Activated T-helper 2 cell treated with anti-CD3 and anti-CD28 coated beads, Interferon-gamma antibody, Interleukin-2, Interleukin-4, amounts not matched to agents 10 μg/mL and 5 μg/mL and 100 μg/mL, durations not matched to agents 14 hours and 24 hours and 36 hours (primary cell): ENCODE measurements at regions of chr2 and their contacts with region 1.

Region 1: GRCh38 chr2:175282290-175282689 is 100.8 kb upstream of the ATP5MC3 start:
- DNase-seq: no peak
- H3K4me3 Mint-ChIP-seq: no peak overlapping the region
- H3K27ac Mint-ChIP-seq: no peak overlapping the region
- H3K4me1 Mint-ChIP-seq: peaks cover 2% of the 10 kb centered on the region
- H3K27me3 Mint-ChIP-seq: peaks cover 18% of the 10 kb centered on the region

Region 2: DNA sequence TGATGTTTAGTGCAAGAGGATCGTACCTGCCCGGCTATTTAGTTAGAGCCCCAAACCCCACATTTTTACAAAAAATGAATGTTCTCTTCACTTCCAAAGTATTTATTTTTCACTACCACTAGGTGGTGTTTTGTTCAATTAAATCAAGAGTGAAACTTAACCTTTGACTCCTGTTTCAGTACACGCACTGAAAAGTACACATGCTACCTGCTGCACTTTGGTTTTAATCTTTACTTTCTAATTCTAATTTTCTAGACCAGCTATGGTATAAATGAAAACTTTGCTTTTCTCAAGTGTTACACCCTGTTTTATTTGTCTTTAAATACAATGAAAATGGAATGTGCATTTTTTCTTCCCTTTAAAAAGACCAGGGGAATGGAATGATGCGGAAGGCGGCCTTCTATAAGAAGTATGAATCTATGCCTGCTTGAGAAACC is 245.7 kb before region 1 on chr2:
- intact Hi-C with region 1: loop called (anchors 2 kb)
- DNase-seq: no peak
- H3K4me3 Mint-ChIP-seq: no peak overlapping the region
- H3K27ac Mint-ChIP-seq: no peak overlapping the region
- H3K4me1 Mint-ChIP-seq: peaks cover 4% of the 10 kb centered on the region
- H3K27me3 Mint-ChIP-seq: no peaks in the 10 kb centered on the region

Region 3: DNA sequence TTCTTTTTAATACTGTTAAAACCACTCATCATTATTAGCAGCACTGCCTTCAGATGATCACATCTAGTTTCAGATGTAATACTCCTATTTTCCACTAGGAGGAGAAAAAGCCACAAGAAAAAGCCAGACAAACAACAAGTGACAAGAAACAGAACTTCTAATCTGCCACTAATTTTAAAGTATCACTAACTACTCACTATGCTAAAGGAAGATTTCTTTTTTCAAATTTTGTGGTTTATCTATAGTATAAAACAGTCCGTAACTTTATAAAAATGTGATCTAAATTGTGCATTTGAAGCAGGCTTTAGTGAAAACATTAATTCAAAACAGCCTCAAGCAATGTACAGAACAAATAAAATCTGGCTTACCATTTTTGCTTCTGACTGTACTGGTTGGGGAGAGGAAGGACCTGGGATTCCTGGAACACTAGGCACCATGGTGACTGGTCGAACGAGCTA is 171.1 kb before region 1 on chr2:
- intact Hi-C with region 1: loop called (anchors 2 kb)
- DNase-seq: no peak
- H3K4me3 Mint-ChIP-seq: no peak overlapping the region
- H3K27ac Mint-ChIP-seq: peak overlapping the region; percentile 72
- H3K4me1 Mint-ChIP-seq: peaks cover 10% of the 10 kb centered on the region
- H3K27me3 Mint-ChIP-seq: no peaks in the 10 kb centered on the region

Region 4: GRCh38 chr2:175203621-175204496 is 78.4 kb before region 1 on chr2:
- intact Hi-C with region 1: loop called (anchors 1 kb)
- DNase-seq: peak; percentile 22
- H3K4me3 Mint-ChIP-seq: no peak overlapping the region
- H3K27ac Mint-ChIP-seq: no peak overlapping the region
- H3K4me1 Mint-ChIP-seq: peaks cover 8% of the 10 kb centered on the region
- H3K27me3 Mint-ChIP-seq: peaks cover 13% of the 10 kb centered on the region